ENCODE measurements at regions of chr1 and their contacts with region 1.

Region 1: GRCh38 chr1:159197561-159198557 is 6.8 kb upstream of the ACKR1 start:
- DNase-seq: peak; percentile 56 to 82 (median 72)
- ATAC-seq: peak; percentile 95
- H3K4me3 ChIP-seq: no peak overlapping the region
- H3K27ac ChIP-seq: no peak overlapping the region
- H3K4me1 ChIP-seq: peaks cover 3 to 8% of the 10 kb centered on the region in 2 experiments; a peak in 3 of 5 replicates
- H3K27me3 ChIP-seq: peaks cover 0 to 14% of the 10 kb centered on the region in 2 experiments; a peak in 3 of 5 replicates
- CTCF ChIP-seq: peak; percentile 89 to 98 (median 89)
- EP300 ChIP-seq: no peak; the same call in 1 of the 2 replicates
- POLR2A ChIP-seq: no peak
- RAD21 ChIP-seq: peak; percentile 64 to 70

Region 2: GRCh38 chr1:159161001-159161718 is 36.7 kb before region 1 on chr1:
- CTCF ChIA-PET with region 1: interaction called, 28 read pairs
- POLR2A ChIA-PET with region 1: no interaction called
- in situ Hi-C with region 1: no loop called
- intact Hi-C with region 1: loop called (anchors 1 kb)
- DNase-seq: peak; percentile 73 to 78 (median 75)
- ATAC-seq: peak; percentile 98
- H3K4me3 ChIP-seq: no peak overlapping the region
- H3K27ac ChIP-seq: no peak overlapping the region
- H3K4me1 ChIP-seq: no peaks in the 10 kb centered on the region
- H3K27me3 ChIP-seq: peaks cover 0 to 4% of the 10 kb centered on the region in 2 experiments; a peak in 3 of 5 replicates
- CTCF ChIP-seq: peak; percentile 99 to 100 (median 100)
- EP300 ChIP-seq: no peak
- POLR2A ChIP-seq: no peak
- RAD21 ChIP-seq: peak; percentile 100

Region 3: GRCh38 chr1:159991513-159991912 is 793.7 kb after region 1 on chr1:
- CTCF ChIA-PET with region 1: no interaction called
- POLR2A ChIA-PET with region 1: no interaction called
- in situ Hi-C with region 1: loop called (anchors 25 kb)
- intact Hi-C with region 1: no loop called
- DNase-seq: no peak
- ATAC-seq: no peak
- H3K4me3 ChIP-seq: no peak overlapping the region
- H3K27ac ChIP-seq: no peak overlapping the region
- H3K4me1 ChIP-seq: no peaks in the 10 kb centered on the region
- H3K27me3 ChIP-seq: peaks cover 6 to 8% of the 10 kb centered on the region in 2 experiments; a peak in 4 of 5 replicates
- CTCF ChIP-seq: no peak
- EP300 ChIP-seq: no peak
- POLR2A ChIP-seq: no peak
- RAD21 ChIP-seq: no peak